ENCODE measurements at regions of chr11 and their contacts with region 1.

Region 1: GRCh38 chr11:73625696-73626318 is 20.6 kb upstream of the PLEKHB1 start:
- DNase-seq: peak; percentile 83
- ATAC-seq: peak; percentile 67
- H3K4me3 Mint-ChIP-seq: no peak overlapping the region
- H3K27ac Mint-ChIP-seq: no peak overlapping the region
- H3K4me1 Mint-ChIP-seq: peaks cover 28% of the 10 kb centered on the region
- H3K27me3 Mint-ChIP-seq: peaks cover 96% of the 10 kb centered on the region
- CTCF ChIP-seq: peak; percentile 92

Region 2: DNA sequence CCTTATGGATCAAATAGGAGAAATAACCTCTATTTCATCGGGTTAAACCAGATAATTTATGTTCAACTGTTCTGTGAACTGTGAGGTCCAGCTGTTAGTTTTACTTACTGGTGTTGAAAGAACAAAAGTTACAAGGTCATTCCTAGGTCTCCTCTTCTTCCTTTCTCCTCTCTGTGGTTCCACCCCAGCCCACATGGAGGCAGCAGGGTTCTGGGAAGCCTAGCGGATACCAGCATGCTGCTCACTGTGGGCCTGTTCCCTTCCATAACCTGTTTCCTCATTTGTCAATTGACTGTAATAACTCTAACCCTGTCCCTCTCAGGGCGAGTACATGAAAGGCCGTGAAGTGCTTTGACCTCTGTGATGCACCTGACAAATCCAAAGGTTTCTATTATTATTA is 221.8 kb before region 1 on chr11:
- CTCF ChIA-PET with region 1: interaction called, 26 read pairs
- POLR2A ChIA-PET with region 1: no interaction called
- DNase-seq: peak; percentile 66
- ATAC-seq: peak; percentile 91
- H3K4me3 Mint-ChIP-seq: no peak overlapping the region
- H3K27ac Mint-ChIP-seq: no peak overlapping the region
- H3K4me1 Mint-ChIP-seq: peaks cover 6% of the 10 kb centered on the region
- H3K27me3 Mint-ChIP-seq: no peaks in the 10 kb centered on the region
- CTCF ChIP-seq: no peak

Region 3: GRCh38 chr11:73530109-73530508 is 95.7 kb before region 1 on chr11:
- CTCF ChIA-PET with region 1: interaction called, 13 read pairs
- POLR2A ChIA-PET with region 1: no interaction called
- DNase-seq: peak; percentile 47
- ATAC-seq: peak; percentile 79
- H3K4me3 Mint-ChIP-seq: no peak overlapping the region
- H3K27ac Mint-ChIP-seq: peak overlapping the region; percentile 60
- H3K4me1 Mint-ChIP-seq: peaks cover 79% of the 10 kb centered on the region
- H3K27me3 Mint-ChIP-seq: no peaks in the 10 kb centered on the region
- CTCF ChIP-seq: no peak

Region 4: GRCh38 chr11:73612601-73613140 is 13.1 kb before region 1 on chr11:
- CTCF ChIA-PET with region 1: interaction called, 33 read pairs
- POLR2A ChIA-PET with region 1: no interaction called
- DNase-seq: no peak
- ATAC-seq: no peak
- H3K4me3 Mint-ChIP-seq: no peak overlapping the region
- H3K27ac Mint-ChIP-seq: no peak overlapping the region
- H3K4me1 Mint-ChIP-seq: 0 out of 2 replicates have a peak, but pooled peaks cover 4% of the 10 kb centered on the region
- H3K27me3 Mint-ChIP-seq: peaks cover 3% of the 10 kb centered on the region
- CTCF ChIP-seq: no peak

Region 5: DNA sequence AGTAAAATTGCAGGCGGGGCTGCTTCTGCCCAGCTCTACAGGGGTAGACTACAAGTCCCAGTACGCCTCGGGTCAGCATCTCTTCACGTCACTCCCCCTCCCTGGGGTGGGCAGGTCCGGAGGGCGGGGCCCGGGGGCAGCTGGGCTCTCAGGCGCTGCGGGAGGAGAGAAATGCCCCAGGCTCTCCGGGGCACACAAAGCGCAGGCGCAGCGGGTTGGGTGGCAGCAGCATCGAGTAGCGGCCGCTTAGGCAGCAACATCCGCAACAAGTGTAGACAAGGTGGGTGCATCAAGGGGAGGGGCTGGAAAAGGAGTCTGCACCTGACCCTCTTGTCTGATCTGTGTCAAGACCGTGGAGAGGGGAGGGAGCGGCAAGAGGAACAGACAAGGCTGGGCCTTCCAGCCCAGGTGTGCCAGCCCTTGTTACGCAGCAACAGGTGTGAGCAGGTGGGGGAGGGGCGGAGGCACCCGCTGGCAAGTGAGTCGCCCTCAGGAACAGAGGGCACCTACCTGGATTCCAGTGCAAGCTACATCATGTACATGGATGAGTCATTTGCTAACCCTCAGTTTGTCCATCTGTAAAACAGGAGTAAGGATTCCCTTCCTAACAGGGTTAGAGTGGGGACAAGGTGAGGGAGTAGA is 21.8 kb after region 1 on chr11:
- CTCF ChIA-PET with region 1: interaction called, 104 read pairs
- POLR2A ChIA-PET with region 1: interaction called, 11 read pairs
- DNase-seq: peak; percentile 96
- ATAC-seq: peak; percentile 78
- H3K4me3 Mint-ChIP-seq: peak overlapping the region; percentile 87
- H3K27ac Mint-ChIP-seq: 0 out of 2 replicates have a peak overlapping the region, but pooled peaks have one; percentile 27
- H3K4me1 Mint-ChIP-seq: peaks cover 45% of the 10 kb centered on the region
- H3K27me3 Mint-ChIP-seq: peaks cover 96% of the 10 kb centered on the region
- CTCF ChIP-seq: no peak

Measured in WTC11 (cell line).